Endothelial cell of umbilical vein (primary cell): ENCODE measurements at regions of chr10 and their contacts with region 1.

Region 1: GRCh38 chr10:88932539-88933256 is 19.9 kb downstream of the ACTA2 start:
- DNase-seq: peak; percentile 55
- H3K4me3 ChIP-seq: no peak overlapping the region
- H3K27ac ChIP-seq: no peak overlapping the region
- H3K4me1 ChIP-seq: peaks cover 4% of the 10 kb centered on the region
- H3K27me3 ChIP-seq: peaks cover 0 to 2% of the 10 kb centered on the region in 2 experiments
- CTCF ChIP-seq: peak; percentile 75 to 84
- POLR2A ChIP-seq: no peak

Region 2: DNA sequence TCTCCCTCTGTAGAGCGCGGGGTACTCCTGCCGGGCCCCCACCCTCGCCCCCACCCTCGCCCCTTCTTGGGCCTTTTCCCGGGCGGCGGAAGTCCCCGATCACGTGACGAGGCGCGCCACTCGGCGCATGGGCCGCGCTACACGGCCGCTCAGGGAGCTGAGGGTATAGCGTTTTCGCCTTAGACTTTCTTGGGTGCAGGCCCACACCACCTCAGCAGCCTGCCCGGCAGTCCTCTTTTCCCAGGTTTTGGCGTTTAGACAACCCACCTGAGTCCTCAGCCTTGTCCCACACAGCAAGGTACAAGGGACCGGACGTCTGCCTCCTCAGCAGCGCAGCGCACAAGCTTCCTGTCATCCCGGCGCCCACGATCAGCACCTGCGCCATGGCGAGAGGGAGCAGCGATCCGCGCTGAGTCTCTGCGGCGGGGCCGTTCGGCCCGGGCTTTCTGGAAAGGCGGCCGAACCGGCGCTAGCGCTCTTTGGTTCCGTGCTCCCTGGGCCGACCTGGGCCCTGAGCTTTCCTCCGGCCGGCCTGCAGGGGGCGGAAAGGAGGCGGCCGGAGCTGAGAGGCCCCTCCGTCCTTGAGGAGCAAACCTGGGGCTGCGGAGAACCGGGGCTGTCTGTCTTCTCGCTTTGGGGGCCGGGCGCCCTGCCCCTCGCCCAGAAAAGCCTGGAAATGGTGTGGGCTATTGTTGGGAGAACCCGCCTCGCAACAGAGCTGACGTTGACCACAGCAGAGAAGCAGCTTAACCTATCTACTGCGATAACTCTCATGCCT is 349.7 kb before region 1 on chr10 and contains the start of gene RNLS:
- CTCF ChIA-PET with region 1: interaction called, 10 read pairs
- POLR2A ChIA-PET with region 1: no interaction called
- dilution Hi-C with region 1: no loop called
- intact Hi-C with region 1: loop called (anchors 5 kb)
- DNase-seq: peak; percentile 73
- H3K4me3 ChIP-seq: peak within 1 kb of the TSS; percentile 42 to 62 (median 47)
- H3K27ac ChIP-seq: peak within 1 kb of the TSS; percentile 0
- H3K4me1 ChIP-seq: peaks cover 4% of the 10 kb centered on the region
- H3K27me3 ChIP-seq: no peaks in the 10 kb centered on the region
- CTCF ChIP-seq: peak; percentile 81 to 93
- POLR2A ChIP-seq: no peak
- total RNA-seq, gene RNLS: 2.5 and 3.6 TPM in 2 replicates

Region 3: GRCh38 chr10:88851706-88852105 is 81.0 kb before region 1 on chr10 and contains the start of gene ANKRD22:
- CTCF ChIA-PET with region 1: interaction called, 14 read pairs
- POLR2A ChIA-PET with region 1: no interaction called
- dilution Hi-C with region 1: no loop called
- intact Hi-C with region 1: no loop called
- DNase-seq: no peak
- H3K4me3 ChIP-seq: no peak within 1 kb of the TSS
- H3K27ac ChIP-seq: no peak within 1 kb of the TSS
- H3K4me1 ChIP-seq: peaks cover 7% of the 10 kb centered on the region
- H3K27me3 ChIP-seq: peaks cover 0 to 7% of the 10 kb centered on the region in 2 experiments
- CTCF ChIP-seq: no peak
- POLR2A ChIP-seq: no peak
- total RNA-seq, gene ANKRD22: not detected in 2 replicates

Region 4: DNA sequence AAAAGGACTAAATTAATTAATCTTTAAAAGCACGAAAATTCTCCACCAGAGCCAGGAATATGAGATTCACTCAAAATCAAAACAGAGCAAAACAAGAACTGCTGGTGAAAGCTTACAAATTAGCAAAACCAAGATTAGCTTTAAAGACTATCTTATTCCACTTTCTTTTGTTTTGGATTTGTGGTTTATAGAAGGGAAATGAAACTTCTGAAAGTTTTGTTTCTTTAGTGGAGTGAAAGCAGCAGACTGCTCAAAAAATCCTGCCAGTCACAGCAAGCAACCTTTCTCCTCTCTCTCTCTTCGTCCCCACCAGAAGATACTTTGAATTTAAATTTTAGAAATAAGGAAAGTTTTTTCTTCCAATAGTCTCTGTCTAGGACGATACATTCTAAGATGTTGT is 12.1 kb after region 1 on chr10:
- CTCF ChIA-PET with region 1: interaction called, 25 read pairs
- POLR2A ChIA-PET with region 1: no interaction called
- dilution Hi-C with region 1: no loop called
- intact Hi-C with region 1: no loop called
- DNase-seq: no peak
- H3K4me3 ChIP-seq: no peak overlapping the region
- H3K27ac ChIP-seq: no peak overlapping the region
- H3K4me1 ChIP-seq: no peaks in the 10 kb centered on the region
- H3K27me3 ChIP-seq: peaks cover 0 to 4% of the 10 kb centered on the region in 2 experiments
- CTCF ChIP-seq: no peak
- POLR2A ChIP-seq: no peak

Region 5: GRCh38 chr10:89029785-89030437 is 97.2 kb after region 1 on chr10:
- CTCF ChIA-PET with region 1: interaction called, 25 read pairs
- POLR2A ChIA-PET with region 1: no interaction called
- dilution Hi-C with region 1: no loop called
- intact Hi-C with region 1: loop called (anchors 1 kb)
- DNase-seq: peak; percentile 79
- H3K4me3 ChIP-seq: no peak overlapping the region
- H3K27ac ChIP-seq: no peak overlapping the region
- H3K4me1 ChIP-seq: peaks cover 19% of the 10 kb centered on the region
- H3K27me3 ChIP-seq: peaks cover 0 to 2% of the 10 kb centered on the region in 2 experiments
- CTCF ChIP-seq: peak; percentile 66 to 84
- POLR2A ChIP-seq: no peak